ENCODE measurements at regions of chr1 and their contacts with region 1.

Region 1: DNA sequence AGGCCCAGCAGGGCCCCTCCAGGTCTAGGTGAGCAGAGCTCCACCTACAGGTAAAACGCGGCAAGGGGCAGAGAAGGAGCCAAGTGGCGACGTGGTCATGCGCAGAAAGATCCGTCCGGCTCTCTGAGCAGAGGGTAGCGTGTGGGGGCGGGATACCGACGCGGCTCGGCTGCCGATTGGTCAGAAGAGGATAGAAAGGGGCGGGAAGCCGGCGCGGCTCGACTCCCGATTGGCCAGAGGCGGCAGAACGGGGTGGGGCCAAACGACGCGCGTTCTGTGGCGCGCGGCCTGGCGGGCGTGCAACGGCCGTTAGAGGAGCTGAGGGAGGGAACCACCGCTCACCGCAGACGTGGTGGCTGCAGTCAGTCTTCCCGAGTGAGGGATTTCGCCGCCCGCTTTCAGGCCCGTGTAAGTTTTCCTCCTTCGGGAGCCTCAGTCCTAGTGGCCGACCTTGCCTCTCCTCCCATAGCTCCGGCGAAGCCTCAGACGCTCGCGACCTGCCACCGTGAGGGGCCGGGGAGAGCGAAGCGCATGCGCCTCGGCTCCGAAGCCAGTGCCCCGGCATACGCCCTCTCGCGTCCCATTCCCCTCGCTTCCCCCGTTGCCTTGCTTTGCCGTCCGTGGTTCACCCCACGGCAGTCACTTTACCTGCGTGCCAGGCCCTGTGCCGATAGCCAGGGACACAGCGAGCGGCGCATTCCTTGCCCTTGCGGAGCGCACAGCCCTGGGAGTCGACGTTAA is at the start of gene CEP85:
- DNase-seq: peak; percentile 99
- ATAC-seq: peak; percentile 95
- H3K4me3 Mint-ChIP-seq: peak within 1 kb of the TSS; percentile 99
- H3K27ac Mint-ChIP-seq: peak within 1 kb of the TSS; percentile 96
- H3K4me1 Mint-ChIP-seq: peaks cover 32% of the 10 kb centered on the region
- H3K27me3 Mint-ChIP-seq: no peaks in the 10 kb centered on the region
- total RNA-seq, gene CEP85: 31.1 to 31.9 TPM

Region 2: GRCh38 chr1:25905680-25906643 is 328.1 kb before region 1 on chr1 and contains the start of gene STMN1:
- CTCF ChIA-PET with region 1: no interaction called
- POLR2A ChIA-PET with region 1: no interaction called
- intact Hi-C with region 1: loop called in 1 of 2 experiments (anchors 1 kb)
- DNase-seq: peak; percentile 96
- ATAC-seq: peak; percentile 81
- H3K4me3 Mint-ChIP-seq: peak within 1 kb of the TSS; percentile 84
- H3K27ac Mint-ChIP-seq: peak within 1 kb of the TSS; percentile 83
- H3K4me1 Mint-ChIP-seq: peaks cover 25% of the 10 kb centered on the region
- H3K27me3 Mint-ChIP-seq: no peaks in the 10 kb centered on the region
- total RNA-seq, gene STMN1: 557 to 771 TPM

Region 3: GRCh38 chr1:26029471-26030135 is 204.5 kb before region 1 on chr1:
- CTCF ChIA-PET with region 1: no interaction called
- POLR2A ChIA-PET with region 1: no interaction called
- intact Hi-C with region 1: no loop called
- DNase-seq: no peak
- ATAC-seq: no peak
- H3K4me3 Mint-ChIP-seq: no peak overlapping the region
- H3K27ac Mint-ChIP-seq: no peak overlapping the region
- H3K4me1 Mint-ChIP-seq: peaks cover 3% of the 10 kb centered on the region
- H3K27me3 Mint-ChIP-seq: peaks cover 4% of the 10 kb centered on the region

Region 4: GRCh38 chr1:26161415-26162219 is 72.5 kb before region 1 on chr1:
- CTCF ChIA-PET with region 1: no interaction called
- POLR2A ChIA-PET with region 1: no interaction called
- intact Hi-C with region 1: loop called in 1 of 2 experiments (anchors 1 kb)
- DNase-seq: peak; percentile 67
- ATAC-seq: peak; percentile 47
- H3K4me3 Mint-ChIP-seq: peak overlapping the region; percentile 39
- H3K27ac Mint-ChIP-seq: no peak overlapping the region
- H3K4me1 Mint-ChIP-seq: peaks cover 10% of the 10 kb centered on the region
- H3K27me3 Mint-ChIP-seq: peaks cover 15% of the 10 kb centered on the region

Region 5: GRCh38 chr1:26254404-26254803 is 20.3 kb after region 1 on chr1:
- CTCF ChIA-PET with region 1: interaction called, 32 read pairs
- POLR2A ChIA-PET with region 1: interaction called, 3 read pairs
- intact Hi-C with region 1: no loop called
- DNase-seq: no peak
- ATAC-seq: no peak
- H3K4me3 Mint-ChIP-seq: no peak overlapping the region
- H3K27ac Mint-ChIP-seq: no peak overlapping the region
- H3K4me1 Mint-ChIP-seq: peaks cover 6% of the 10 kb centered on the region
- H3K27me3 Mint-ChIP-seq: no peaks in the 10 kb centered on the region

Region 6: GRCh38 chr1:26279456-26280332 is 45.6 kb after region 1 on chr1 and contains the start of gene SH3BGRL3:
- CTCF ChIA-PET with region 1: interaction called, 6 read pairs
- POLR2A ChIA-PET with region 1: no interaction called
- intact Hi-C with region 1: loop called in 1 of 2 experiments (anchors 1 kb)
- DNase-seq: peak; percentile 92
- ATAC-seq: peak; percentile 56
- H3K4me3 Mint-ChIP-seq: peak within 1 kb of the TSS; percentile 78
- H3K27ac Mint-ChIP-seq: peak within 1 kb of the TSS; percentile 94
- H3K4me1 Mint-ChIP-seq: peaks cover 82% of the 10 kb centered on the region
- H3K27me3 Mint-ChIP-seq: no peaks in the 10 kb centered on the region
- total RNA-seq, gene SH3BGRL3: 267 to 381 TPM

Region 7: GRCh38 chr1:26336477-26337205 is 102.6 kb after region 1 on chr1:
- CTCF ChIA-PET with region 1: interaction called, 5 read pairs
- POLR2A ChIA-PET with region 1: no interaction called
- intact Hi-C with region 1: loop called in 1 of 2 experiments (anchors 1 kb)
- DNase-seq: peak; percentile 89
- ATAC-seq: peak; percentile 93
- H3K4me3 Mint-ChIP-seq: peak overlapping the region; percentile 75
- H3K27ac Mint-ChIP-seq: no peak overlapping the region
- H3K4me1 Mint-ChIP-seq: no peaks in the 10 kb centered on the region
- H3K27me3 Mint-ChIP-seq: no peaks in the 10 kb centered on the region

Region 8: GRCh38 chr1:26695356-26696118 is 461.5 kb after region 1 on chr1 and contains the start of gene ARID1A:
- CTCF ChIA-PET with region 1: no interaction called
- POLR2A ChIA-PET with region 1: no interaction called
- intact Hi-C with region 1: loop called in 1 of 2 experiments (anchors 2 kb)
- DNase-seq: peak; percentile 97
- ATAC-seq: peak; percentile 55
- H3K4me3 Mint-ChIP-seq: peak within 1 kb of the TSS; percentile 81
- H3K27ac Mint-ChIP-seq: peak within 1 kb of the TSS; percentile 91
- H3K4me1 Mint-ChIP-seq: peaks cover 30% of the 10 kb centered on the region
- H3K27me3 Mint-ChIP-seq: no peaks in the 10 kb centered on the region
- total RNA-seq, gene ARID1A: 73.1 to 112 TPM

Measured in activated CD4-positive, alpha-beta T cell treated with anti-CD3 and anti-CD28 coated beads for 36 hours (primary cell).